ENCODE measurements at regions of chr3 and their contacts with region 1.

Region 1: DNA sequence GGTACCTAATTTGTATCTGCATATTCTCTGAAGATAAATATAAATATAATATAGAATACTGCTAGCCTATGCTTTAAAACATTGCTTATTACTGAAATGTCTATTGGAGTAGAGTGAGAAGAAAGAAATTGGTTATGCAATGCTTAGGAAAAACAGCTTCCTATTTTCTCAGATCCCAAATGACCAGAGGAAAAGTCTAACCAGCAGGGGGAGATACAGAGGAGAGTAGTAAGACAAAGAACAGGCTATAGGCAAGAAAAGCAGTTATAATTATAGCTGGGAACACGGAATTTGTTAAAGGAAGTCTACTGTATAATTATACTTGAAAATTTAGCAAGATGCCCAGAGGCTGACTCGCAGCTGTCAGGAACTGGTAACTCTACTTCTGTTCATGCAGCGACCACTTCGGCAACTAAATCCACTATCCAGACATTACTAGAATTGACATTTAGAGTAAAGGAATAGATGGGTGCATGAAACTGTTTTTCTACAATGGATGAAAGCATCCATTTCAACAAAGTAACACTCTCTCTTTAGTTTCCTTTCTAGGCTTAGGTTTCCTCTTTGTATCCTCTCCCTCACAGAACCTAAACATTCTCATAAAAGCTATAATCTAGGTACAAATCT is 97.2 kb downstream of the TBC1D5 start:
- DNase-seq: no peak
- ATAC-seq: peak; percentile 55 to 65
- H3K4me3 ChIP-seq: no peak overlapping the region
- H3K27ac ChIP-seq: no peak overlapping the region
- H3K4me1 ChIP-seq: no peaks in the 10 kb centered on the region
- H3K27me3 ChIP-seq: no peaks in the 10 kb centered on the region

Region 2: DNA sequence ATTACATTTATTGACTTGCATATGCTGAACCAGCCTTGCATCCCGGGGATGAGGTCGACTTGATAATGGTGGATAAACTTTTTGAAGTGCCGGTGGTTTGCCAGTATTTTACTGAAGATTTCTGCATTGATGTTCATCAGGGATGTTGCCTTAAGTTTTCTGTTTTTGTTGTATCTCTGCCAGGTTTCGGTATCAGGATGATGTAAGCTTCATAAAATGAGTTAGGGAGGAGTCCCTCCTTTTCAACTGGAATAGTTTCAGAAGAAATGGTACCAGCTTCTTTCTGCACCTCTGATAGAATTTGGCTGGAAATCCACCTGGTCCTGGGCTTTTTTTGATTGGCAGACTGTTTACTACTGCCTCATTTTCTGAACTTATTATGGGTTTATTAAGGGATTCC is 153.6 kb before region 1 on chr3:
- intact Hi-C with region 1: no loop called
- DNase-seq: no peak
- ATAC-seq: no peak
- H3K4me3 ChIP-seq: no peak overlapping the region
- H3K27ac ChIP-seq: no peak overlapping the region
- H3K4me1 ChIP-seq: no peaks in the 10 kb centered on the region
- H3K27me3 ChIP-seq: no peaks in the 10 kb centered on the region

Region 3: GRCh38 chr3:17605032-17605431 is 40.2 kb before region 1 on chr3:
- intact Hi-C with region 1: no loop called
- DNase-seq: no peak
- ATAC-seq: no peak
- H3K4me3 ChIP-seq: no peak overlapping the region
- H3K27ac ChIP-seq: no peak overlapping the region
- H3K4me1 ChIP-seq: no peaks in the 10 kb centered on the region
- H3K27me3 ChIP-seq: no peaks in the 10 kb centered on the region

Region 4: DNA sequence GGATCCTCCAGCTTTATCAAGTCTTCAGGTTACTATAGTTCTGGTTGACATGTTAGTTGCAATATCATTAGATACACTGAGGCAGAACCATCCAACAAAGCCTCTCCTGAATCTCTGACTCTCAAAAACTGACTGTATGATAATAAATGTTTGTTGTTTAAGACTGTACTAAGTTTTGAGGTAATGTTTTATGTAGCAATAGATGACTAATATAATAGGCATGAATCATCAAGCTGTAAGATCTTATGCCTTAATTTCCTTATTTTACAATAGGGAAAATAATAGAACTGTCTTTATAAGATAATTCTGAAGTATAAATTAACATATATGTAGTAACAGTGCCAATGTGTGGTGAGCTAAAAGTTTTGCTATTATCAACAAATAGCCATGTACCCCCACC is 186.2 kb after region 1 on chr3:
- intact Hi-C with region 1: loop called in 1 of 4 experiments (anchors 5 kb)
- DNase-seq: no peak
- ATAC-seq: no peak
- H3K4me3 ChIP-seq: no peak overlapping the region
- H3K27ac ChIP-seq: no peak overlapping the region
- H3K4me1 ChIP-seq: no peaks in the 10 kb centered on the region
- H3K27me3 ChIP-seq: no peaks in the 10 kb centered on the region